Right cardiac atrium (tissue), 5 donors: ENCODE measurements at regions of chr6 and their contacts with region 1.

Region 1: GRCh38 chr6:114747987-114748630 is 405.3 kb upstream of the HS3ST5 start:
- DNase-seq: peak in 2 of 3 donors; percentile 42 to 53
- ATAC-seq: no peak
- H3K4me3 ChIP-seq: no peak overlapping the region
- H3K27ac ChIP-seq: no peak overlapping the region
- H3K4me1 ChIP-seq: no peaks in the 10 kb centered on the region
- H3K27me3 ChIP-seq: no peaks in the 10 kb centered on the region

Region 2: DNA sequence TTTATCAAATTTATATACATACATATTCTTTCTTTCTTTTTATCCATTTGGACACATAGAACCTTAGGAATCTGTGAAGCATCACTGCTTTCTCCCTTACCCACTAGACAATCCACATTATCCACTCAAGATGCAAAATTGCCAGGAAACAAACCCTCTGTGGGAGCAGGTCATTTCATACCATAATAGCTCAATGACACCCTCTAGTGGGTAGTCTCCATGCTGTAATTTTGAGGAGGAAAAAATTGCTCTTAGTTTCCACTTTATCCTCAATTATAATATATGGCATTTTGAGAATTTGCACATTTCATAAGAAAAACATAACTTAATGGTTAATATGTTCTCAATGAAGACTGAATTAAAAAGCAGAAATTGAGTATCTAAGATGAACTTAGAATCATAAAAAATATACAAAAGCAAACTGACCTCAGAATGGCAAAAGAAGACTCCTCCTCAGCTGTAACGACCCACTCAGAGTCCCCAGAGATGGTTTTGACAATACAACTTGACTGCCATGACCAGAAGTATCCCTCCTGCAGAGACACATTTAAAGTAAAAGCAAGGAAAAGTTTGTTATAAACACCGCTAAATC is 1148.5 kb after region 1 on chr6:
- intact Hi-C with region 1: loop called in 3 of 4 experiments (anchors 5 to 10 kb)
- DNase-seq: no peak
- ATAC-seq: no peak
- H3K4me3 ChIP-seq: no peak overlapping the region
- H3K27ac ChIP-seq: no peak overlapping the region
- H3K4me1 ChIP-seq: no peaks in the 10 kb centered on the region
- H3K27me3 ChIP-seq: no peaks in the 10 kb centered on the region